Esophagus muscularis mucosa (tissue), 4 donors: ENCODE measurements at regions of chr1 and their contacts with region 1.

Region 1: DNA sequence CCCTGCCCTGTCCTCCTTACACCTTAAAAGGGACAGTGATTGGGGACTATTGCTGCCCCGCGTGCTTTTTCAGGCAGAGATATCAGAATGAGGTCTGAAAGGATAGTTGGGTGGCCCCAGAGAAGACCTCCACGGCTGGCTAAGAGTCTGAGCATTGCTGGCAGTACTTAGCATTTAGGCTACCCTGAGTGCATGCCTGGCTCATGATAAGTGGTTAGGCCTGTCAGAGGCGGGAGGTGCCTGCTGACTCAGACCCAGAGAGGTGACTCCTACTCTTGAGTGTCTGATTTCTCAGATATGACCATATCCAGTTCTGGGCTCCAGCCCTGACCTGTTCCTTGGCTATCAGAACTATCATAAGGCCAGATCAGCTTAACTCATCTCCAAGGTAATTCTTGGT is 213.7 kb downstream of the PBX1 start:
- DNase-seq: no peak
- H3K4me3 ChIP-seq: no peak overlapping the region
- H3K27ac ChIP-seq: peak overlapping the region; percentile 76 to 82 (median 78)
- H3K4me1 ChIP-seq: peaks cover 60 to 94% (median 87%) of the 10 kb centered on the region in 4 donors
- H3K27me3 ChIP-seq: no peaks in the 10 kb centered on the region
- CTCF ChIP-seq: no peak
- EP300 ChIP-seq: no peak
- POLR2A ChIP-seq: no peak

Region 2: GRCh38 chr1:164637461-164638375 is 134.9 kb before region 1 on chr1:
- intact Hi-C with region 1: loop called (anchors 5 kb)
- DNase-seq: no peak
- H3K4me3 ChIP-seq: no peak overlapping the region
- H3K27ac ChIP-seq: peak overlapping the region; percentile 72 to 81 (median 80)
- H3K4me1 ChIP-seq: peaks cover 72 to 100% (median 96%) of the 10 kb centered on the region in 4 donors
- H3K27me3 ChIP-seq: no peaks in the 10 kb centered on the region
- CTCF ChIP-seq: no peak
- EP300 ChIP-seq: no peak
- POLR2A ChIP-seq: no peak